Endothelial cell of umbilical vein (primary cell): ENCODE measurements at regions of chr3 and their contacts with region 1.

Region 1: DNA sequence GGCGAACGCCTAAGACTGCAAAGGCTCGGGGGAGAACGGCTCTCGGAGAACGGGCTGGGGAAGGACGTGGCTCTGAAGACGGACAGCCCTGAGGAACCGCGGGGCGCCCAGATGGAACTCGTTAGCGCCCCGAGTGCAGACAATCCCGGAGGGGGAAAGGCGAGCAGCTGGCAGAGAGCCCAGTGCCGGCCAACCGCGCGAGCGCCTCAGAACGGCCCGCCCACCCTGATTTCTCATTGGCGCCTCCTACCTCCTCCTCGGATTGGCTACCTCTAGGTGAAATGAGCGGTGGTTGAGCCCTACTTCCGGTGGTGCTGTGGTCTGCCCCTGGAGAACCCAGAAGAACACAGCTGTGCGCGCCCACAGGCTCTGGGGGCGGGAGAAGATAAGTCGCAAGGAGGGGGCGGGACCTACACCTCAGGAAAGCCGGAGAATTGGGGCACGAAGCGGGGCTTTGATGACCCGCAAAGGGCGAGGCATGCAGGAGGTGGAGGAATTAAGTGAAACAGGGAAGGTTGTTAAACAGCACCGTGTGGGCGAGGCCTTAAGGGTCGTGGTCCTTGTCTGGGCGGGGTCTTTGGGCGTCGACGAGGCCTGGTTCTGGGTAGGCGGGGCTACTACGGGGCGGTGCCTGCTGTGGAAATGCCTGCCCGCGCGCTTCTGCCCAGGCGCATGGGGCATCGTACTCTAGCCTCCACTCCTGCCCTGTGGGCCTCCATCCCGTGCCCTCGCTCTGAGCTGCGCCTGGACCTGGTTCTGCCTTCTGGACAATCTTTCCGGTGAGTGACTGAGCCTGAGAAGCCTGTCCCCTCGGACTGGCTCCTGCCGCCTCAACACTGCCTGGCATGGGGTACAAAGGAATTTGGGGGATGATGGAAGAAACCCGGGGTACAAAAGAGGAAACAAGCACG is at the start of gene OGG1:
- DNase-seq: peak; percentile 98
- H3K4me3 ChIP-seq: peak within 1 kb of the TSS; percentile 55 to 80 (median 58)
- H3K27ac ChIP-seq: peak within 1 kb of the TSS; percentile 46
- H3K4me1 ChIP-seq: peaks cover 39% of the 10 kb centered on the region
- H3K27me3 ChIP-seq: no peaks in the 10 kb centered on the region
- CTCF ChIP-seq: no peak
- POLR2A ChIP-seq: peak; percentile 85
- total RNA-seq, gene OGG1: 24.1 and 27.2 TPM in 2 replicates

Region 2: DNA sequence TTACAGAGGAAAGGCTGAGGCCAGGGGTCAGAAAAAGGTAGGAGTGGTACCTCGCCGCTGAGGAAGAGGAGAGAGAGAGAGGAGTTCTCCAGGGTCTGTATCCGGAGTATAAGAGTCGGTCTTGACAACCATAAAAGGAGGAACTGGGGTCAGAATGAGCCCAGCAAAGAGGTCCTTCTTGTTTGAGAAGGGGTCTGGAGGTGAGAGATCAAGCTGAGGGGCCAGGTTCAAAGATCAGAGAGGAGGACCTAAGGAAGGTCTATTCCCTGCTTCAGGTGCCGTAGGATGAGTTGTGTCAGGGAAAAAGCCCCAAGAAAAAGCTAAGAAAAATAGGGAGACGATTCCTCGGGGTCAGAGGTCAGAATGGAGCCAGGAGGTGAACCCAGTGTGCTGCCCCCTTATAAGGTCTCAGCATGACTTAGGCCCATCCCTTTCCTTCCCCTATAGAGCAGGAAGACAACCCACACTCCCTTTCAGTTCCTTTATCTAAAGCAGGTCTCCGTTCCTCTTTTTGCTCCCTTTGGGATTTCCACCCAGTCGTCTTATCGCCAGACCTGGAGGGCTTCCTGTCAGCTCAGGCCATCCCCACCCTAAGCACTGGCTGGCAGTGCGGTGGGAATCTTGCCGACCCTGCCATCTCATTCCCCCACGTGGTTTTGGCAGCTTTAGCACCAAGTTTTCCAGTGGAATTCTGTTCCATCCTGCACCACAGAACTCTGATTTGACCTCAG is 99.9 kb before region 1 on chr3:
- CTCF ChIA-PET with region 1: no interaction called
- POLR2A ChIA-PET with region 1: no interaction called
- dilution Hi-C with region 1: no loop called
- intact Hi-C with region 1: loop called (anchors 1 kb)
- DNase-seq: no peak
- H3K4me3 ChIP-seq: peak overlapping the region; percentile 50 to 80 (median 77)
- H3K27ac ChIP-seq: peak overlapping the region; percentile 34
- H3K4me1 ChIP-seq: peaks cover 5% of the 10 kb centered on the region
- H3K27me3 ChIP-seq: no peaks in the 10 kb centered on the region
- CTCF ChIP-seq: no peak
- POLR2A ChIP-seq: no peak

Region 3: GRCh38 chr3:9769426-9770275 is 19.8 kb after region 1 on chr3 and contains the start of gene CAMK1:
- CTCF ChIA-PET with region 1: interaction called, 5 read pairs
- POLR2A ChIA-PET with region 1: no interaction called
- dilution Hi-C with region 1: no loop called
- intact Hi-C with region 1: loop called (anchors 1 kb)
- DNase-seq: peak; percentile 75
- H3K4me3 ChIP-seq: peak within 1 kb of the TSS; percentile 60 to 65 (median 62)
- H3K27ac ChIP-seq: peak within 1 kb of the TSS; percentile 27
- H3K4me1 ChIP-seq: peaks cover 18% of the 10 kb centered on the region
- H3K27me3 ChIP-seq: no peaks in the 10 kb centered on the region
- CTCF ChIP-seq: no peak
- POLR2A ChIP-seq: peak; percentile 79
- total RNA-seq, gene CAMK1: 23.5 and 25.7 TPM in 2 replicates